HEK293 (cell line): ENCODE measurements at regions of chr17 and their contacts with region 1.

Region 1: DNA sequence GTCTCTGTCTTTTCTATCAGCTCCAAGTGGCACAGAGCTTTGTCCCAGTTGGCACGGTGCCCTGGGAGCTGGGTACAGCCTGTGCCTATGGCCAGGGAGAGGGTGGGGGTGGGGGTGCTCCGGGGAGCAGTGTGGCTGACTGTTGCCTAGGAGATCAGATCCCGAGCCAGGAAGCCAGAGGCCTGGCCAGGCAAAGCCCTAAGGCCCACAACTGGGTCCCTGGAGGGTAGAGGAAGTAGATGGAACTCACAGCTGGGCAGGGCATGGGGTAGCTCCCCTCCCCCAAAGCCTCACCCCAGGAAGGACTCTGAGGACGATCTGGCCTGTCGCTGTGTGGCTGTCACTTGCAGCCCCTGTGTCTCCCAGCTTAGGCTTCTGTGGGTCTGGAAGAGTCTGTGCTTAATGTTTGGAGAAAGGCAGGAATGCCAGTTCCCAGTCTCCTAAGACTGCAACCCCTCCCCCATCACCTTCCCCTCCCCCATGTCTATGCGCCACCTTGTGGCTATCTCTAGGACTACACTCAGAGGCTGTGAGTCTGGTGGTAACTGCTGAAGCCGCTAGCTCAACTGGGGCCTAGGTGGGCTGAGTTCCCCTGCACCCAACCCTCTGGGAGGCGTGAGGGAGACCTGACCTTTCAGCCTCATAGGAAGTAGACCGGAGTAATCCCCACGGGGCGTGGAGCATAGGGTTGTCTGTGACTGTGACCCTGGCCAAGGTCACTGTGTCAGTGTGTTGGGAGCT is 12.6 kb downstream of the THRA start:
- H3K4me3 ChIP-seq: no peak overlapping the region
- H3K27ac ChIP-seq: no peak overlapping the region
- H3K4me1 ChIP-seq: peaks cover 22% of the 10 kb centered on the region
- CTCF ChIP-seq: peak; percentile 80

Region 2: GRCh38 chr17:40021451-40021971 is 53.9 kb before region 1 on chr17:
- CTCF ChIA-PET with region 1: interaction called, 61 read pairs
- POLR2A ChIA-PET with region 1: interaction called, 3 read pairs
- H3K4me3 ChIP-seq: no peak overlapping the region
- H3K27ac ChIP-seq: no peak overlapping the region
- H3K4me1 ChIP-seq: peaks cover 13% of the 10 kb centered on the region
- CTCF ChIP-seq: no peak

Region 3: DNA sequence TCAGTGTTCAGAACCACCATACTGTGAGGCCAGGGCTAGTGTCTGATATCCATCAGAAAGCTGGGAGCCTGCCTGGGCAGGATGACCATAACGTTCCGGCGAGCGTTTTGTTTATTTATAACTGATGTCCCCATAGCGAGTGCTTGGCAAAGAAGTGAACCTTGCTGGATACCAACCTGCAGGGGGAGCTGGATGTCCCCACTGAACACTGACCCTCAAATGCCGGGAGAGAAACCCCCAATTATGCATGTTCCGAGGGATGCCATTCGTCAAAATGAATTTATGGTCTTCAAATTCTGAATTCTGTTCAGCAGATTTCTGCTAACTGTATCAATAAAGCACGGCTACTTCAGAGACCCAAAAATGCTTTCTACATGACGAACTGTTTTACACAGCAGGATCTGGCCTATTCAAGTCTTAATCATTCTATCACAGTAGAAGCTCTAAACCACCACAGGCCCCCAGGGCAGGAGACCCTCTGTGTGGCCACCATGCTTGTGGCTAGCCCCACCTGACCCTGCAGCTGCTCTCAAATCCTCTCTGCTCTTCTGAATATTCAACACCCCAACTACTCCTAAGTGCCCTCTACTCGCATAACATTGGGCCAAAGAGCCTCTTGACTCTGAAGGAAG is 36.4 kb before region 1 on chr17:
- CTCF ChIA-PET with region 1: interaction called, 154 read pairs
- POLR2A ChIA-PET with region 1: interaction called, 8 read pairs
- H3K4me3 ChIP-seq: no peak overlapping the region
- H3K27ac ChIP-seq: no peak overlapping the region
- H3K4me1 ChIP-seq: no peaks in the 10 kb centered on the region
- CTCF ChIP-seq: no peak

Region 4: DNA sequence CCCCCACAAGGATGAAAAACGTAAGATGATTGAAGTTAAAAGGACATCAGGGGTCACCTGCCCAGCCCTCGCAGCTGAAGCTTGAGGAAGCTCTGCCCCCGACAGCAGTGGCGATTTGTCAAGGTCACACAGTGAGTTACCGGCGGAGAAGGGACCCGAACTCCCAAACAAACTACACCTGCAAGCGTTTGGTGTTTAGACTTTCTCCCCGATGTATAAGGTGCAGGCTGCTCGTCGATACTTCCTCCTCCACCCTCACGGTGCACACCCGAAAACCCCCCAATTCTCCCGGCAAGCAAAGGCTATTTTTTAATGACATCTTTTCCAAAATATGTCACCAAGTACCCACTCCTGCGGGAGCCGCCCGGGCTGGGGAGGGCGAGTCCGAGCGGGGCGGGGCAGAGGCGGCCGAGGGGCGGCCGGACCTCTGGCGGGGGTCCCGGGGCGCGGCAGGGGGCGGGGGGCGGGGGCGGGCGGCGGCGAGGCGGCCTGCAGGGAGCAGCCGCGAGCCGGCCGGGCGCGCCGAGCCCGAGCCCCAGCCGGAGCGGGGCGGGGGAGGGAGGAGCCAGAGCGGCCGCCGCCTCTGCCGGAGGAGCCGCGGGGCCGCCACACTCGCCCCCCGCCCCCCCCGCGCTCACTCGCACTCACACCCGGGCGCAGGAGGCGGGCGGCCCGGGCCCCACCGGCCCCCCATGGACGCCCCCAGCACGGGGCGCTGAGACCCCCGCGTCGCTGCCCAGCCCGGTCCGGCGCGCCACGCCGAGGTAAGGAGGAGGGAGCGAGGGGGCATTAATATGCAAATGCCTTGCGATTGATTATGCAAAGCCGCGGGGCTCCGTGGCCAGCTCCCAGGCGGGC is 12.8 kb before region 1 on chr17 and contains the start of gene THRA:
- CTCF ChIA-PET with region 1: interaction called, 166 read pairs
- POLR2A ChIA-PET with region 1: interaction called, 15 read pairs
- H3K4me3 ChIP-seq: peak within 1 kb of the TSS; percentile 84
- H3K27ac ChIP-seq: peak within 1 kb of the TSS; percentile 86; the same call in 1 of the 2 replicates
- H3K4me1 ChIP-seq: peaks cover 17% of the 10 kb centered on the region
- CTCF ChIP-seq: no peak

Region 5: GRCh38 chr17:40091691-40092397 is 16.5 kb after region 1 on chr17:
- CTCF ChIA-PET with region 1: interaction called, 61 read pairs
- POLR2A ChIA-PET with region 1: interaction called, 4 read pairs
- H3K4me3 ChIP-seq: no peak overlapping the region
- H3K27ac ChIP-seq: no peak overlapping the region
- H3K4me1 ChIP-seq: no peaks in the 10 kb centered on the region
- CTCF ChIP-seq: no peak

Region 6: GRCh38 chr17:40107522-40108174 is 32.3 kb after region 1 on chr17:
- CTCF ChIA-PET with region 1: interaction called, 61 read pairs
- POLR2A ChIA-PET with region 1: interaction called, 5 read pairs
- H3K4me3 ChIP-seq: no peak overlapping the region
- H3K27ac ChIP-seq: peak overlapping the region; percentile 3; the same call in 1 of the 2 replicates
- H3K4me1 ChIP-seq: peaks cover 11% of the 10 kb centered on the region
- CTCF ChIP-seq: no peak